Gastrocnemius medialis (tissue), 4 donors: ENCODE measurements at regions of chr3 and their contacts with region 1.

Region 1: DNA sequence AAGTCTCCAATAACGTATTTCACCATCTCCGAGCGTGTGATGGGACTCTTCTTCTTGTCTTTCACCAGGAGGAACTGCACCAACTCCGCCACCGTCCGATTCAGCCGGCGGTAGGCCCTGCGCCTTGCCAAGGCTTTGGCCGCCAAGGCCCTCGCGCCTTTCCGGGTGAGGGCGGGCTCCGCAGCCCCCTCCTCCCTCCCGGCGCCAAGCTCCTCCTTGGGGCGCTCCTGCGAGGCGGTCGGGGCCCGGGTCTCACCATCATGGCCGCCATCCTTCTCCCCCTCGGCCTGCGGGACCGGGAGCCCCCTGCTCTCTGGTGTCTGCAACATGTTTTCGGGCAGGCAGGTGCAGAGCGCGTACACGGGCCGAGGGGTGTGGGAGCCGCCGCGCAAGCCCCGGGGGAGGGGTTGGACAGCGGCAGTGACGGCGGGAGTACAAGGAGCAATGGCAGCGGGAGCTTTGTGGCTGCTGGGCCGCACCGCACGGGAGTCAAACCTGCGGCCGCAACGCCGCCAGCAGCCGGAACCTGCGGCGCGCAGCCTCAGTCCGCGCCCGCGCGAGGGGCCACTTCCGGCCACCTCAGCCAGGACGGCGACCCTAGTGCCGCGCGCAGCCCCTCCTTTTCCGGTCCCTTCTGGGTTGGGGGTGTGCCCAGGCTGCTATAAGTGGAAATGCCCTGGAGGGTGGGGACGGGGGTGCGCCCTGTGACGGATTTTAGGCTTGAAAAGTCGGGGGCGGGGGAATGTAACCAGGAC is at the start of gene MAGEF1:
- DNase-seq: peak; percentile 35 to 43
- ATAC-seq: peak; percentile 81 to 84
- H3K4me3 ChIP-seq: peak within 1 kb of the TSS; percentile 67 to 97 (median 78)
- H3K27ac ChIP-seq: peak within 1 kb of the TSS; percentile 80 to 96 (median 87)
- H3K4me1 ChIP-seq: peaks cover 19 to 22% of the 10 kb centered on the region in 2 donors
- H3K27me3 ChIP-seq: no peaks in the 10 kb centered on the region
- CTCF ChIP-seq: no peak
- POLR2A ChIP-seq: peak; percentile 42 to 61
- total RNA-seq, gene MAGEF1: 9.5 to 19.9 (median 14.8) TPM

Region 2: DNA sequence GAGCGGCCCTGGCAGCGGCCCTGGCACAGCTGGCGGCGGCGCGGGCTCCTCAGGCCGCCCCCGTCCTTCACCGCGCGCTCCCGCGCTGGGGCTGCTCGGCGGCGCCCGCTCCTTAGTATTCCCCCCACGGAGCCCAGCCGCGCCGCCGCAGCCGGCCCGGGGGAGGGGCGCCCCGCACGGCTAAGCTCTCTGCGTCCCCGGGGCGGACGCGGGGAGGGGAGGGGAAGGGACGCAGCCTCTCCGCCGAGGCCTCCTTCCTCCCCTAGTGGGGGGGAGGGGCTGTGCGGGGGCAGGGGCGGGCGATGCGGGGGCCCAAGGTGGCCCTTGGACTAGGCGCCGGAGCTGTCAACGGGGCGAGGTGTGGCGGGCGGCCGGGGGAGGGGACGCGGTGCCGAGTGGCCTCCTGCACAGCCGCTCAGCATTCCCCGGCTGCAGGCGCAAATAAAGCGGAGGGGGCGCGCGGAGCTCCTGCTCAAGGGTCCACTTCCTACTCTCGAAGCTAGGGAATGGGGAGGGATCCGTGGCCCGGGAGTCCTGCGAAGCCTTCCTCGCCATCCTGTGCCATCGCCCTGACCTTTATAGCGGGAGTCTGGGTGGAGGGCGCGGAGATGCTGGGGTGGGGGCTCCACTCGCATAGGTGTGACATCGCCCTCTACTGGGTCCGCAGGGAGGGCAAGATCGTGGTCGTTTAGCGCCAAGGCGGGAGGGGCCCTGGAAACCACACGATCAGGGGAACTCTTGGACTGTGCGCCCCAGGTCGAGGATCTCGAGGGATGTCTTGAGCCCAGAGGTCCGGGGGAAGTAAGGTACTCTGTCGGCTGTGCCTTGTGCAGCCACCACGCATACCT is 127.9 kb before region 1 on chr3:
- in situ Hi-C with region 1: no loop called
- intact Hi-C with region 1: loop called (anchors 1 kb)
- DNase-seq: no peak
- ATAC-seq: peak in 1 of 2 donors; percentile 31
- H3K4me3 ChIP-seq: peak overlapping the region; percentile 61 to 72 (median 66)
- H3K27ac ChIP-seq: peak overlapping the region; percentile 62 to 81 (median 74)
- H3K4me1 ChIP-seq: no peaks in the 10 kb centered on the region
- H3K27me3 ChIP-seq: no peaks in the 10 kb centered on the region
- CTCF ChIP-seq: no peak
- POLR2A ChIP-seq: no peak

Region 3: DNA sequence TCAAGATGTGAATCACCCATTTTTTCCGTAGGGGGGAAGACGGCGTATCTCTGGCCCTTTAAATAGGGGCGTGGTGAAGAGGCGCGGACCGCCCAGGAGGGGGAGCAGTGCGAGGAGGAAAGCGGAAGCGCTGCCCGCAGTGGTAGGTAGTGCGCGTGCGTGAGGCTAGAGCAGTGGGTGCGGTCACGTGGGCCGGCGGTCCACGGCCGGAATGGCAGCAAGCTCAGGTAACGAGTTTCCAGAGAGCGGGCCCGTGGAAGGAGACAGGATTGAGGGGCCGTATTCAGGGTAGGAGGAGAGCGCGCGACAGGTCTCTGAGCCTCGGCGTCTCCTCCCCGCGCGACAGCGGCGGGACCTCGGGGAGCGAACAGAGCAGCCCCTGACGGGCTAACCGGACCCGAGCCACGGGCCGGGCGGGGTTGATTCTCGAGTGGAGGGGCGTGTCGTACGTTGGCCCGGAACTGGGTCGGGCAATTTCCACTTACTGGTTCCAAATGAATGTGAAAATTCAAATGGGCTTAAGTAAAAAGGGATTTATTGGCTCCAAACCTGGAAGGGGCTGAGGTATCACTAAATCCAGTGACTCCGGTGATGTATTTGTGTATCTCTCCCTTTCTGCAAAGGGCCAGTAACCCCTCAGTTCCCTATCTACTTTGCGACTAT is 100.5 kb after region 1 on chr3 and contains the start of gene VPS8:
- in situ Hi-C with region 1: no loop called
- intact Hi-C with region 1: loop called (anchors 5 kb)
- DNase-seq: peak; percentile 92 to 96
- ATAC-seq: peak; percentile 81 to 83
- H3K4me3 ChIP-seq: peak within 1 kb of the TSS; percentile 70 to 87 (median 82)
- H3K27ac ChIP-seq: peak within 1 kb of the TSS; percentile 89 to 94 (median 90)
- H3K4me1 ChIP-seq: peaks cover 45 to 51% of the 10 kb centered on the region in 2 donors
- H3K27me3 ChIP-seq: no peaks in the 10 kb centered on the region
- CTCF ChIP-seq: peak in 4 of 5 experiments; percentile 77 to 89 (median 81)
- POLR2A ChIP-seq: peak; percentile 98
- total RNA-seq, gene VPS8: 37.2 to 64.1 (median 51.2) TPM